Activated CD4-positive, alpha-beta memory T cell treated with anti-CD3 and anti-CD28 coated beads for 36 hours (primary cell): ENCODE measurements at regions of chr5 and their contacts with region 1.

Region 1: DNA sequence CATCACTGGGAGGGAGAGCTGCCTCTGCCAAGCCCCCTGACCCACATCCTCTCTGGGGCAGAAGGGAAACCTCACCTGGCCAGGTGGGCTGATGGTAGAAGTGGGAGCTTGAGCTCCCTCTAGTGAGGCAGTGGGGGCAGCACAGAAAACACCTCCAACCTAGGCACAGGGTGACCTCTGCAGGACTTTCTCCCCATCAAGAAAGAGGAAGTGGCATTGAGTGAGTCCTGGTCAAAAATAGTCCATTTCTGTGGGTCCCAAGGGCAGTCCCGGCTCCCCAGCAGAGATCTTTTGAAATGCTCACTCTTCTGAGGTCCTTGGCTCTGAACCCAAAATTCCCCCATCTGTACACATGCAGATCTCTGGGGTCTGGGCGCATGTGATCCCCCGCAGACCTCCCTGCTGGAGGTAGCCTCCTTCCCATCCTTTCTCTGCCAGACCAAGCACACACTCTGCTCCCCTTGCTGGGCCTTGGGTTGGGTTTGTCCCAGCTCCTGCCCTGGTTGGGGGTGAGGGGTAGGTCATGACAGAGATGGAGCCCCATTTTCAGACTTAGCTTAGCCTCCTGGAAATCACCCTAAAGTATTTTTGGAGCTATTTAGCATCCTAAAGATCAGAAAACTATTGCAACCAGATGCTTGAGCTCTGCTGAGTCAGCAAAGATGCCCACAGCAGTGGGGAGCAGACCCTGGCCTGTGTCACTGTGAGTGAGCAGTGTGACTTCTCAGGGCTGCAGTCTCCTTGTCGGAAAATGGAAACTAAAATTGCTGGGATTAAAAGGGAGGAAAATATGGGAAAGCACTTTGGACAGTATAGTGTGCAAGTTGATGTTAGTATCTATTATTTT is 41.6 kb upstream of the LCP2 start:
- DNase-seq: peak; percentile 80
- H3K4me3 Mint-ChIP-seq: no peak overlapping the region
- H3K27ac Mint-ChIP-seq: peak overlapping the region; percentile 42
- H3K4me1 Mint-ChIP-seq: peaks cover 42% of the 10 kb centered on the region
- H3K27me3 Mint-ChIP-seq: no peaks in the 10 kb centered on the region

Region 2: GRCh38 chr5:169650701-169651331 is 688.3 kb before region 1 on chr5:
- CTCF ChIA-PET with region 1: no interaction called
- POLR2A ChIA-PET with region 1: no interaction called
- intact Hi-C with region 1: loop called (anchors 10 kb)
- DNase-seq: no peak
- H3K4me3 Mint-ChIP-seq: peak overlapping the region; percentile 55
- H3K27ac Mint-ChIP-seq: peak overlapping the region; percentile 95
- H3K4me1 Mint-ChIP-seq: peaks cover 98% of the 10 kb centered on the region
- H3K27me3 Mint-ChIP-seq: no peaks in the 10 kb centered on the region

Region 3: DNA sequence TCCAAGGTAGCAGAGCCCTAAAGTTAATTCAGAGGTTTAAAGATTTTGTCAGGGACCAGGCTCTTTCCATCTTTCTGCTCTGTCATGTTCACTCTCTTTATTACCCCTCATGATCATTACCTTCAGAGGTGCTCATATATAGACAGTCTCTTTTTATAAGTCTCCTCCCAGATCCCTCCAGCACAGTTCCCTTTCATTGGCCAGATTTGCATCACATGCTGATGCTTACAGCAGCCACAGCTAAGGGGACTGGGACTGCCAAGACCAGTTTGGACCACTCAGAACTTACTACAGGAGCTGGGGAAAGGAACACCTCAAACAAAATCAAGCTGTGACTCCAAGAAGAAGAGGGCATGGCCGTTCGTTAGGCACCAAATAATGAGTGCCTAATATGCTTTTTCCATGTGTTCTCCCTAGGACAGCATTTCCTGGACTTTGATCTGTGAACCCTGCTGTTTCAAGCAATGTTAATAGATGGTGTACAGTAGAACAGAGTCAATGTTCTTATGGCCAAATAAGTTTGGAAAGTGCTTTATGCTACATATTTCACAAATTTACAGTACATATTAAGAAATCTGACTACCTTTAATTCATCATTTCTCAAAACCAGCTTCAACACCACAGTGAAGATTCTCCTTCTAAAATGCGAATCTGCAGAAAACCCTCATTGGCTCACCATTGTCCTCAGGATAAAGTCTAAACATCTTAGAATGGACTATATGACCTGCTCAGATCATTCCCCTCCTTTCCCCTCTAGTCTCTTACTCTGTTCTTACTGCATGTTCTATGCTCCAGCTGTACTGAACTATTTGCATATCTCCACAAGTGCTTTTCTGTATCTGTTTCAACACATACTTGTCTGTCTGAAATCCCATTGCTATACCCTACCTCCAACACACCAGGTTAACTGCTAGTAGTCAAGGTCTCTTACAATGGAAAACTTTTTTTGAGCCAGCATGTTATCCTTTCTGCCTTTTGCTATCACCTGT is 103.0 kb before region 1 on chr5:
- CTCF ChIA-PET with region 1: interaction called, 28 read pairs
- POLR2A ChIA-PET with region 1: interaction called, 3 read pairs
- intact Hi-C with region 1: no loop called
- DNase-seq: no peak
- H3K4me3 Mint-ChIP-seq: no peak overlapping the region
- H3K27ac Mint-ChIP-seq: no peak overlapping the region
- H3K4me1 Mint-ChIP-seq: peaks cover 7% of the 10 kb centered on the region
- H3K27me3 Mint-ChIP-seq: no peaks in the 10 kb centered on the region

Region 4: DNA sequence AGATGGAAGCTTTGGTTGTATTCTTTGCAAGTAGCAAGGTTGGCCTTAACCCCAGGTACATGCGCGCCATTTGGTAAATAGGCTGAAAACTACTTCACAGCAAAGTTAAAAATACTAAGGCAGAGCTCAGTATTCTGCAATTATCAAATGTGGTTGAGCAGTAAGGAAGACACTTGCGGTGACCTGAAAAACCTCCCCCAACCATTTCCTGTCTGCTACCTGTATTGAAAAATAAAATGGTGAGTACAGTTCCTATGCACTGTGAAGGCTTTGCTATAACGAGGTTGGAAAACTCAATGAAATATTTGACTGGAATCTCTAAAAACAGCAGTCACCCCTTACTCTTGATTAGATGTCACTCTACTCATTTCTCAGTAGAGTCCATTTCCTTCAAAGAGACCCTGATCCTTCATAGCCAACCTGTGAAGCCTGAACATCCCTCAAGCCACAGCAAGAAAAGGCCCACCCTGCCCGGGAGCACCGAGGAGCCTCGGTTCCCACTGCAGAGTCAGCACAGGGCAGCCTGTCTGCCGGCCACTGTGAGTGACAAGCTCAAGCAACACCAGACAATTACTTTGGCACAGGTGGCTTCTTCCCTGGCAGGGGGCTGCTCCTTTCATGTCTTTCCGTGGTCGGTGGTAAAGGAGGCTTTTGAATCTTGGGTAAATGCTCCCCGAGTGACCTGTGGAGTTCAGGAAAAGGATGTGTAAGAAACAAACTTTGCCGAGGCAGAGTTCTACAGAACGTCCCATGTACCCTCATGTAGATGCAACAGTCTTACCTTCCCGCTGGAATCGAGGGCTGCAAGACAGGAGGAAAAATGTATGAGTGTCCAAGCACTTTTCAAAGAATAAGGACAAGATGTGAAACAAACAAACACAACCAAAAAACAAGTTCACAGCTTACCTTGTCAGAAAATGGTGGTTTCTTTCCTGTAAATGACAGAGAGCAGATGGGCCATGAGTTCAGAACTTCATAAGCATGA is 76.8 kb before region 1 on chr5:
- CTCF ChIA-PET with region 1: interaction called, 290 read pairs
- POLR2A ChIA-PET with region 1: interaction called, 18 read pairs
- intact Hi-C with region 1: no loop called
- DNase-seq: peak; percentile 54
- H3K4me3 Mint-ChIP-seq: peak overlapping the region; percentile 30
- H3K27ac Mint-ChIP-seq: peak overlapping the region; percentile 91
- H3K4me1 Mint-ChIP-seq: peaks cover 61% of the 10 kb centered on the region
- H3K27me3 Mint-ChIP-seq: no peaks in the 10 kb centered on the region

Region 5: DNA sequence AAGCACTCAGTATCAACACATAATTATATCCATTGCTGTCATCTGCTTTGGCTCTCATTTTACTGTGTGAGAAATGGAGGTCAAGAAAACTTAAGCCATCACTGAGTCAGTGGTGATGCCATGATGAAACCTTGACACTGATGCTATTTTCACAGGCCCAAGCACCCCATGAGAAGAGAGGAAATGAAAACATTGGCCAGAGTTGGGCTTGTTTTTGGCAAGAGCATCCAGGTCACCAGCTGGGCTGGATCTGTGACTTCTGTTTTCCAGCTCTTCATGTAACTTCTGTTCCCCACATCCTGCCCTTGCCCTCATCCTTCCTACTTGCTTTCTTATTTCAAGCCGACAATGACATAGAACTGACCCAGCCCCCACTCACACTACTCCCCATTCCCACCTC is 51.6 kb before region 1 on chr5:
- CTCF ChIA-PET with region 1: interaction called, 111 read pairs
- POLR2A ChIA-PET with region 1: interaction called, 144 read pairs
- intact Hi-C with region 1: no loop called
- DNase-seq: peak; percentile 47
- H3K4me3 Mint-ChIP-seq: no peak overlapping the region
- H3K27ac Mint-ChIP-seq: peak overlapping the region; percentile 99
- H3K4me1 Mint-ChIP-seq: peaks cover 100% of the 10 kb centered on the region
- H3K27me3 Mint-ChIP-seq: no peaks in the 10 kb centered on the region

Region 6: GRCh38 chr5:170380361-170380951 is 41.3 kb after region 1 on chr5:
- CTCF ChIA-PET with region 1: no interaction called
- POLR2A ChIA-PET with region 1: no interaction called
- intact Hi-C with region 1: no loop called
- DNase-seq: no peak
- H3K4me3 Mint-ChIP-seq: no peak overlapping the region
- H3K27ac Mint-ChIP-seq: no peak overlapping the region
- H3K4me1 Mint-ChIP-seq: no peaks in the 10 kb centered on the region
- H3K27me3 Mint-ChIP-seq: peaks cover 3% of the 10 kb centered on the region

Region 7: DNA sequence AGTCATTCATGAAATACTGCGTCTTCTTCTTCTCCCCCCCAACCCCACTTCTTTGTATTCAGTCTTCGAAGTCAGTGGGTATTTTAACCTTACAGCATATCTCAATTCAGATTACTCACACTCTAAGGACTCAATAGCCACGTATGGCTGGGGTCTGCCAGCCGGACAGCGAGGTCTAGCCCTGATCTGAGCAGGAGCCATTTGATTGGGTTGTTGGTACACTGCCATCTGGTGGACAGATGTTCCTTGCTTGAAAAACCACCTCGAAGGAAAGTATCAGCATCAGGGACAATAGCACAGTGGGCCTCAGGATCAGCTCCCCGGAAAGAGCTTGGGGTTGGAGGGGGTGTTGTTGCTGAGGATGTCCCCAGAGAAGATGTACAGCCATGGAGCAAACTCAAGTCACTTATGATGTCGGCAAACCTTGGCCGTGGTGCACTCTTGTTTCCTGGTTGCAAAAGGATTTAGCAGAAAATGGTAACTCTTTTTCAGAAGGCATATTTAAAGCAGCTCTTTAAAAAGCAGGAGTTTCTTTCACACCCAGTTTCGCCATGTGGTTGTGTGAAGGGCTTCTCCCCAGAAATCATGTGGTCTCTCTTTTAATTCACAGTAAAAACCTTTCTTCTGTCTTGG is 81.7 kb after region 1 on chr5:
- CTCF ChIA-PET with region 1: interaction called, 4 read pairs
- POLR2A ChIA-PET with region 1: no interaction called
- intact Hi-C with region 1: loop called (anchors 5 kb)
- DNase-seq: peak; percentile 52
- H3K4me3 Mint-ChIP-seq: no peak overlapping the region
- H3K27ac Mint-ChIP-seq: no peak overlapping the region
- H3K4me1 Mint-ChIP-seq: peaks cover 14% of the 10 kb centered on the region
- H3K27me3 Mint-ChIP-seq: no peaks in the 10 kb centered on the region